Pancreas (tissue), 10 donors: ENCODE measurements at regions of chr19 and their contacts with region 1.

Region 1: GRCh38 chr19:7340959-7341837 is 7.5 kb upstream of the ARHGEF18 start:
- DNase-seq: peak; percentile 64 to 96 (median 85)
- ATAC-seq: peak; percentile 67 to 89 (median 86)
- H3K4me3 ChIP-seq: no peak overlapping the region
- H3K27ac ChIP-seq: no peak overlapping the region
- H3K4me1 ChIP-seq: no peaks in the 10 kb centered on the region
- H3K27me3 ChIP-seq: no peaks in the 10 kb centered on the region
- CTCF ChIP-seq: peak; percentile 85 to 93 (median 89)

Region 2: DNA sequence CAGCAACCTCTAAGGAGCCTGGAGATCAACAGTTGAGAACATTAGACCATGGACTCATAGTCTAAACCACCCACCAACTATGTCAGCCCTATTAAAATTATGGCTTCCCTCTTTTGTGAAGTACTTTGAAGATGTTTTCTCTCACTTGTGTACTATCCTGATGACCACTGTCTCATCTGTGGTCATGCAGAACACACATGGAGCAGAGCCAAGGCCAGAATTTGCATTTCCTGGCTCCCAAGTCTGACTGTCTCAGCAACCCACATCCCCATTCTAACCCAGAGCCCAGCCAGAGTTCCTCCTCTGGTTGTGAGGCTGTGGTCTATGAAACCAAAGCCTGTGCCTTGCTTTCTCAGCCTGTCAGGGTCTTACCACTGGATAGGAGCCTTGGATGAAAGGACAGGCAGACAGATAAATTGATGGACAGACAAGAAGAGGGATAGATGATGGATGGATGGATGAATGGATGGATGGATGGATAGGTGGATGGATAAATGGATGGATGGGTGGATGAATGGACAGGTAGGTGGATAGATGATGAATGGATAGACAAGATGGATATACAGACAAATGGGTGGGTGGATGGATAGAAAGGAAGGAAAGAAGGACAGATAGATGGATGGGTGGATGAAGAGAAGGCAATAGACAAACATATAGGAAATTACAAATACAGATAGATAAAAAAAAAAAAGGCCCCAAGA is 236.3 kb before region 1 on chr19:
- intact Hi-C with region 1: loop called in 1 of 3 experiments (anchors 5 kb)
- DNase-seq: peak in 1 of 6 donors; percentile 49
- ATAC-seq: peak in 2 of 4 donors; percentile 15 to 43
- H3K4me3 ChIP-seq: no peak overlapping the region
- H3K27ac ChIP-seq: no peak overlapping the region
- H3K4me1 ChIP-seq: peaks cover 0 to 10% (median 1%) of the 10 kb centered on the region in 3 donors
- H3K27me3 ChIP-seq: no peaks in the 10 kb centered on the region
- CTCF ChIP-seq: no peak

Region 3: GRCh38 chr19:7159105-7159933 is 181.9 kb before region 1 on chr19:
- intact Hi-C with region 1: loop called in 1 of 3 experiments (anchors 10 kb)
- DNase-seq: no peak
- ATAC-seq: peak in 3 of 4 donors; percentile 15 to 61 (median 42)
- H3K4me3 ChIP-seq: no peak overlapping the region
- H3K27ac ChIP-seq: peak overlapping the region in 1 of 4 donors; percentile 22
- H3K4me1 ChIP-seq: no peaks in the 10 kb centered on the region
- H3K27me3 ChIP-seq: no peaks in the 10 kb centered on the region
- CTCF ChIP-seq: no peak